ENCODE measurements at regions of chr9 and their contacts with region 1.

Region 1: DNA sequence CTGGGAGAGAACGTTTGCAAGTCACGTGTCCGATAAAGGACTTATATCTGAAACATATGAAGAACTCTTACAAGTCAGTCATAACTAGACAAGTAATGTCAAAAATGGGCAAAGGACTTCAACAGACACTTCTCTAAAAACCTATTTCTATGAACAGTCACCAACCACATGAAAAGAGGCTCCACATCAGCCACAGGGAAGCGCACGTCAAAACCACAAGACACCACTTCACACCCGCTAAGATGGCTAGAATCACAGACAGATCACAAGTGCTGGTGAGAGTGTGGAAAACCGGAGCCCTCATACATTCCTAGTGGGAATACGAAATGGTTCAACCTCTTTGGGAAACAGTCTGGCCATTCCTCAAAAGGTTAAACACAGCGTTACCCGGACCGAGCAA is 11.5 kb upstream of the CARD9 start:
- DNase-seq: no peak
- ATAC-seq: no peak
- H3K4me3 ChIP-seq: no peak overlapping the region
- H3K27ac ChIP-seq: no peak overlapping the region
- H3K4me1 ChIP-seq: peaks cover 0 to 11% (median 0%) of the 10 kb centered on the region in 9 donors
- H3K27me3 ChIP-seq: no peaks in the 10 kb centered on the region
- CTCF ChIP-seq: no peak

Region 2: DNA sequence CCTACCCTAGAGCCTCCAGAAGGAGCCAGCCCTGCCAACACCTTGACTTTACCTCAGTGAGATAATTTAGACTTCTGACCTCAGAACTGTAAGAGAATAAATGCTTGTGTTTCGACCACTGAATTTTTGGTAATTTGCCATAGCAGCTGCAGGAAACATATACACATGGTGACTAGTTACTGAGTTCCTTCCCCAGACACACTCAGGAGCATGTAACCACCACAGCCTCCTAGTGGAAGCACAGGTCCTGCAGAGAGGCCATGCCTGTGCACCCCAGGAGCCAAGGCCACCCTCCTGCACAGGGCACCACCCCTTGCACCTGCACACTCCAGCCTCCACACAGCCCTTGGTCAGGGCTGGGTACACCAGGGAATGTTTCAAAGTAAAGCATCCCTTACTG is 470.1 kb before region 1 on chr9:
- intact Hi-C with region 1: no loop called
- DNase-seq: no peak
- ATAC-seq: no peak
- H3K4me3 ChIP-seq: no peak overlapping the region
- H3K27ac ChIP-seq: no peak overlapping the region
- H3K4me1 ChIP-seq: peaks cover 0 to 5% (median 0%) of the 10 kb centered on the region in 9 donors
- H3K27me3 ChIP-seq: no peaks in the 10 kb centered on the region
- CTCF ChIP-seq: no peak

Region 3: GRCh38 chr9:136445799-136446198 is 60.8 kb after region 1 on chr9:
- intact Hi-C with region 1: loop called in 1 of 10 experiments (anchors 1 kb)
- DNase-seq: no peak
- ATAC-seq: no peak
- H3K4me3 ChIP-seq: no peak overlapping the region
- H3K27ac ChIP-seq: no peak overlapping the region
- H3K4me1 ChIP-seq: peaks cover 0 to under 1% (median 0%) of the 10 kb centered on the region in 9 donors
- H3K27me3 ChIP-seq: no peaks in the 10 kb centered on the region
- CTCF ChIP-seq: no peak